Activated CD4-positive, alpha-beta memory T cell treated with anti-CD3 and anti-CD28 coated beads for 36 hours (primary cell): ENCODE measurements at regions of chr3 and their contacts with region 1.

Region 1: GRCh38 chr3:188788621-188789081 is 383.1 kb upstream of the TPRG1 start:
- DNase-seq: peak; percentile 88
- H3K4me3 Mint-ChIP-seq: no peak overlapping the region
- H3K27ac Mint-ChIP-seq: no peak overlapping the region
- H3K4me1 Mint-ChIP-seq: peaks cover 2% of the 10 kb centered on the region
- H3K27me3 Mint-ChIP-seq: no peaks in the 10 kb centered on the region

Region 2: GRCh38 chr3:186882881-186883685 is 1905.6 kb before region 1 on chr3:
- CTCF ChIA-PET with region 1: no interaction called
- POLR2A ChIA-PET with region 1: no interaction called
- intact Hi-C with region 1: loop called (anchors 2 kb)
- DNase-seq: peak; percentile 80
- H3K4me3 Mint-ChIP-seq: peak overlapping the region; percentile 59
- H3K27ac Mint-ChIP-seq: peak overlapping the region; percentile 90
- H3K4me1 Mint-ChIP-seq: peaks cover 63% of the 10 kb centered on the region
- H3K27me3 Mint-ChIP-seq: no peaks in the 10 kb centered on the region

Region 3: GRCh38 chr3:187227658-187228258 is 1560.9 kb before region 1 on chr3:
- CTCF ChIA-PET with region 1: no interaction called
- POLR2A ChIA-PET with region 1: no interaction called
- intact Hi-C with region 1: no loop called
- DNase-seq: no peak
- H3K4me3 Mint-ChIP-seq: no peak overlapping the region
- H3K27ac Mint-ChIP-seq: no peak overlapping the region
- H3K4me1 Mint-ChIP-seq: no peaks in the 10 kb centered on the region
- H3K27me3 Mint-ChIP-seq: peaks cover 5% of the 10 kb centered on the region

Region 4: DNA sequence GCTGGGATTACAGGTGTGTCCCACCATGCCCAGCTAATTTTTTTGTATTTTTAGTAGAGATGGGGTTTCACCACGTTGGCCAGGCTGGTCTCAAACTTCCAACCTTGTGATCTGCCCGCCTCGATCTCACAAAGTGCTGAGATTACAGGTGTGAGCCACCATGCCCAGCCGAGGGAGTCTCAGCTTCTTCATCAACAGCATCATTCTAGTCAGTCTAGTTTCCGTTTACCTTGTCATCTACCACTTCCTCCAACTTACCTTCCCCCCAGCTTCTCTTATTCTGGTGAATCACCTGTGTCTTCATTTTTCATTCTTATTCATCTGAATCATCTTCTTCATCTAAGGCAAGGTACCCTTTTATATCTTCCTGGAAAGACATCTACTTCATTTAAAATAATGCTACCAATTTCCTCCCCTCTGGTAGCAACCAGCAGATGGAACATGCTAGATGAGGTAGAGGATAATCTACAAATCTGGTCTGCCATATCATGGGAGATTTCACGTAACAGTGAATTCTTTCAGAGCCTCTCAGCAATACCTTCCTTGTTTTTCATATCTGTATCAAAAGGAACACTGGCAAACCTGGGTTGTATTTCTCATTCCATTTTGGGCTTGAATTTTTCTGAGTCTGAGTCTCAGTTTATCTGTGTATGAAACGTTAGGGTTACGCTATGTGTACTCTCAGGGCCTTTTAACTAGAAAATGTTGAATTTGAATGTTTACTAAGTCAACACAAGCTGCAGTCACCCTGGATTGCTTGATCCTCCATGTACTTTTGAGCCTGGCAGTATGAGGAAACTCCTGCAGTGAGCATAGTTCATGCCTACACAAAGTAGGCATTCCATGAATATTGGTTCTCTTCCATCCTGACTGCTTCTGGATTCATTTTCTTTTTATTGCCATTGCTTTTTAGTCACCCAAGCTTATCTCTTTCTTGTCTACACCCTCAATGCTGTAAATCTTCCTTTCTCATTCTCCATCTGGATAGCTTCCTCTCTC is 617.9 kb before region 1 on chr3:
- CTCF ChIA-PET with region 1: no interaction called
- POLR2A ChIA-PET with region 1: no interaction called
- intact Hi-C with region 1: loop called (anchors 1 kb)
- DNase-seq: peak; percentile 82
- H3K4me3 Mint-ChIP-seq: peak overlapping the region; percentile 28
- H3K27ac Mint-ChIP-seq: peak overlapping the region; percentile 89
- H3K4me1 Mint-ChIP-seq: peaks cover 58% of the 10 kb centered on the region
- H3K27me3 Mint-ChIP-seq: no peaks in the 10 kb centered on the region

Region 5: DNA sequence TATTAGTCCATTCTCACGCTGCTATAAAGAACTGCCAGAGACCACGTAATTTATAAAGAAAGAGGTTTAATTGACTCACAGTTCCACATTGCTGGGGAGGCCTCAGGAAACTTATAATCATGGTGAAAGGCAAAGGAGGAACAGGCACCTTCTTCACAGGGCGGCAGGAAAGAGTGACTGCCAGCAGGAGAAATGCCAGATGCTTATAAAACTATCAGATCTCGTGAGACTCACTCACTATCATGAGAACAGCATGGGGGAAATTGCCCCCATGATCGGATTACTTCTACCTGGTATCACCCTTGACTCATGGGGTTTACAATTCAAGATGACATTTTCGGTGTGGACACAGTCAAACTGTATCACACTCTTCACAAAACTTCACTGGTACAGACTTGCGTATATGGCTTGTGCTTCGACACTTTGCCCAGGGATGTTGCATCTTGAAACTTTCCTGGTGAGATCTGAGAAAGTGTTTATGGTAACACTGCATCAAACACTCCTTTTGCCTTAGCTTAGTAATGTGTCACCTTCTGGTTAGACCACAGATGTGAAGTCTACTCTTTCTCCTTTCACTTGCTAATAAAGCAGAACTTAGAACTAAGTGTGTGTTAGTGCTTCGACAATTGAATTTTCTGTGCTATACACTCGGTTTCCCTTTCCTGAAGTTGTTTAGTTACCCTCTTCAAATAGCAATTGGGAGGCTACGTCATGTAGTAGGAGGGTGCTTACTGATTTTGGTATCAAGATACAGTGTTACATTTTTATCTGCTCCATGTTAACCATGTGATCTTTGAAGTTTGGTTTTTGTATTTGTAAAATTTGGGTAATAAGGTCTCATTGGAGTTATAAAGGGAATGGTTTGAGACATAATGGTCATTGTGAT is 449.0 kb before region 1 on chr3:
- CTCF ChIA-PET with region 1: no interaction called
- POLR2A ChIA-PET with region 1: no interaction called
- intact Hi-C with region 1: loop called (anchors 1 kb)
- DNase-seq: peak; percentile 75
- H3K4me3 Mint-ChIP-seq: peak overlapping the region; percentile 68
- H3K27ac Mint-ChIP-seq: peak overlapping the region; percentile 93
- H3K4me1 Mint-ChIP-seq: peaks cover 44% of the 10 kb centered on the region
- H3K27me3 Mint-ChIP-seq: peaks cover 2% of the 10 kb centered on the region

Region 6: DNA sequence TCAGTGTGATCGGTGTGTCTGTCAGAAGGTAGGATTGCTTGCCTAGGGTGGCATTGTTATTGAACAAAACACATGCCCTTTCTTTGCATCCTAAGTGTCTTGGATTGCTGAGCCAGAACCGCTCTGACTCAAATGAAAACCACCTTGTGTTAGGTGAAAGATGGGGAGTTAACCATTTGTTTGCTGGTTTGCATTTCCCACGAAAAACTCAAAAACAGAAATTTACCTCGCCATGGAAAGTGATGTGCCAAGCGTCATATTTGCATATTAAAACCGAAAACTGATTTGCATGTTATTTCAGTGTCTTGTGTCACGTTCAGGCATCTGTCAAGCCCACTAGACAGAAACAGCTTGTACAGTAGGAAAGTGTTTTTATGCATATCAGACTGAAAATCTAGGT is 91.5 kb before region 1 on chr3:
- CTCF ChIA-PET with region 1: no interaction called
- POLR2A ChIA-PET with region 1: no interaction called
- intact Hi-C with region 1: loop called (anchors 1 kb)
- DNase-seq: peak; percentile 55
- H3K4me3 Mint-ChIP-seq: no peak overlapping the region
- H3K27ac Mint-ChIP-seq: peak overlapping the region; percentile 7
- H3K4me1 Mint-ChIP-seq: peaks cover 50% of the 10 kb centered on the region
- H3K27me3 Mint-ChIP-seq: peaks cover 7% of the 10 kb centered on the region

Region 7: GRCh38 chr3:188884299-188885043 is 95.8 kb after region 1 on chr3:
- CTCF ChIA-PET with region 1: no interaction called
- POLR2A ChIA-PET with region 1: no interaction called
- intact Hi-C with region 1: no loop called
- DNase-seq: no peak
- H3K4me3 Mint-ChIP-seq: no peak overlapping the region
- H3K27ac Mint-ChIP-seq: no peak overlapping the region
- H3K4me1 Mint-ChIP-seq: peaks cover 3% of the 10 kb centered on the region
- H3K27me3 Mint-ChIP-seq: no peaks in the 10 kb centered on the region

Region 8: DNA sequence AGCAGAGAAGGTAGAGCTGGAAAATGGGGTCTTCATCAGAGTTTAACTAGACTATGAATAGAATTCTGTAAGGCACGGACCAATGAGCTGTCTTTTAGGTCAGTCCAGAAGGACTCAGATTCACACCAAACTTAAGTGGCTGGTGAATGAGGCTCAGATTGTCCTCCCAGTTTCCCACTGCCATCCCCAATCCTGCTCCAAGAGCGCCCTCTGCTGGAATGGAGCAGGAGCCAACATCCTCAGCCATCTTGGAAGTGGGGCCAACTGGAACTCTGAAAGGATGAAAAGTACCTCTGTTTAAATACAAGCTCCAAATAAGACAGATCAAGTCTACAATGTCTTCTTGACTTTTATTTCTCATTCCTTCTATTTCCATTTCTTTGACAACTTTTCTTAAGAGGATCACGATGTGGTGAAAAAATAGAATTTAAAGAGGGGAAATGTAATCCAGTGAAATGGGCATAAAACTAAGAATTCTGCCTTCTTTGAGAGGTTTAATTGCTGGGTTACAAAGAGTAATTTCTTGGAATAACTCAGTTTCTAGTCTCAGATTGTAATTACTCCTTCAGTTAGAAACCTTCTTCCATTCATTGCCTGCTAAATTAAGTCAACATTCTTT is 166.0 kb after region 1 on chr3:
- CTCF ChIA-PET with region 1: interaction called, 7 read pairs
- POLR2A ChIA-PET with region 1: no interaction called
- intact Hi-C with region 1: loop called (anchors 2 kb)
- DNase-seq: peak; percentile 85
- H3K4me3 Mint-ChIP-seq: no peak overlapping the region
- H3K27ac Mint-ChIP-seq: no peak overlapping the region
- H3K4me1 Mint-ChIP-seq: peaks cover 28% of the 10 kb centered on the region
- H3K27me3 Mint-ChIP-seq: peaks cover 4% of the 10 kb centered on the region

Region 9: DNA sequence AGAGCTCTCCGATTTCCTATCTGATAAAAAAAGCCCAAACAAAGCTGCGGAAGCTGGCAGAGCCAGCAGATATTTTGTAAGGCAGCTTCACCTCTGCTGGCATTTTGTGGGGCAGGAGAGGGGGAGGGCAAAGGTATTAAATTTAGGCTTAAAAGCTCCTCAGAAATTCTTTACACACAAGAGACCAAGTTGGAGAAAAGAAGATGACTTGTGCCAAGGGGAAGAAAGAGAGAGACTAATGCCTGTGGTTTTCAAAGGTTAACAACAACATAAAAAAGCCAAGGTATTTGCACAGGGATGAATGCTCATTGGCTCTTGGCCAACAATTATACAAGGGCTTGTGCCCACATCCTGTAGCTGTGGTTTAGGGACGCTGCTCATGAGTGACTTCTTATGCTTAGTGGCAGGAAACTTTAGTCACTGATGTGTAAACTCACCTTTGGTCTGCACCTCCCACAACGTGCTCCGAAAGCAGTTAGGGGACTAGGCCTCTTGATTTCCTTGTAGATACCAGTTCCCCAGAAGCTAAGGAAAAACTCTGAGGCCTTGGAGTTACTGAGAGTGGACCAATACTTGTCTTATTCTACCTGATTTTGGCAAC is 536.0 kb after region 1 on chr3:
- CTCF ChIA-PET with region 1: no interaction called
- POLR2A ChIA-PET with region 1: no interaction called
- intact Hi-C with region 1: loop called (anchors 2 kb)
- DNase-seq: peak; percentile 93
- H3K4me3 Mint-ChIP-seq: peak overlapping the region; percentile 46
- H3K27ac Mint-ChIP-seq: peak overlapping the region; percentile 93
- H3K4me1 Mint-ChIP-seq: peaks cover 58% of the 10 kb centered on the region
- H3K27me3 Mint-ChIP-seq: no peaks in the 10 kb centered on the region